ENCODE measurements at regions of chr18 and their contacts with region 1.

Region 1: GRCh38 chr18:62450546-62451406 is 72.0 kb upstream of the ZCCHC2 start:
- DNase-seq: peak; percentile 99
- H3K4me3 ChIP-seq: peak overlapping the region in 1 of 3 experiments; percentile 26
- H3K27ac ChIP-seq: peak overlapping the region; percentile 87
- H3K4me1 ChIP-seq: peaks cover 33% of the 10 kb centered on the region
- H3K27me3 ChIP-seq: no peaks in the 10 kb centered on the region
- CTCF ChIP-seq: no peak
- POLR2A ChIP-seq: peak; percentile 65

Region 2: GRCh38 chr18:62437235-62438017 is 13.3 kb before region 1 on chr18:
- CTCF ChIA-PET with region 1: interaction called, 22 read pairs
- POLR2A ChIA-PET with region 1: no interaction called
- dilution Hi-C with region 1: no loop called
- intact Hi-C with region 1: loop called (anchors 1 kb)
- DNase-seq: peak; percentile 57
- H3K4me3 ChIP-seq: no peak overlapping the region
- H3K27ac ChIP-seq: peak overlapping the region; percentile 65
- H3K4me1 ChIP-seq: peaks cover 22% of the 10 kb centered on the region
- H3K27me3 ChIP-seq: no peaks in the 10 kb centered on the region
- CTCF ChIP-seq: no peak
- POLR2A ChIP-seq: no peak

Region 3: GRCh38 chr18:62485684-62486083 is 34.9 kb after region 1 on chr18:
- CTCF ChIA-PET with region 1: interaction called, 5 read pairs
- POLR2A ChIA-PET with region 1: no interaction called
- dilution Hi-C with region 1: no loop called
- intact Hi-C with region 1: loop called (anchors 1 kb)
- DNase-seq: peak; percentile 91
- H3K4me3 ChIP-seq: peak overlapping the region in 1 of 3 experiments; percentile 5
- H3K27ac ChIP-seq: peak overlapping the region; percentile 65
- H3K4me1 ChIP-seq: peaks cover 23% of the 10 kb centered on the region
- H3K27me3 ChIP-seq: no peaks in the 10 kb centered on the region
- CTCF ChIP-seq: no peak
- POLR2A ChIP-seq: no peak

Region 4: DNA sequence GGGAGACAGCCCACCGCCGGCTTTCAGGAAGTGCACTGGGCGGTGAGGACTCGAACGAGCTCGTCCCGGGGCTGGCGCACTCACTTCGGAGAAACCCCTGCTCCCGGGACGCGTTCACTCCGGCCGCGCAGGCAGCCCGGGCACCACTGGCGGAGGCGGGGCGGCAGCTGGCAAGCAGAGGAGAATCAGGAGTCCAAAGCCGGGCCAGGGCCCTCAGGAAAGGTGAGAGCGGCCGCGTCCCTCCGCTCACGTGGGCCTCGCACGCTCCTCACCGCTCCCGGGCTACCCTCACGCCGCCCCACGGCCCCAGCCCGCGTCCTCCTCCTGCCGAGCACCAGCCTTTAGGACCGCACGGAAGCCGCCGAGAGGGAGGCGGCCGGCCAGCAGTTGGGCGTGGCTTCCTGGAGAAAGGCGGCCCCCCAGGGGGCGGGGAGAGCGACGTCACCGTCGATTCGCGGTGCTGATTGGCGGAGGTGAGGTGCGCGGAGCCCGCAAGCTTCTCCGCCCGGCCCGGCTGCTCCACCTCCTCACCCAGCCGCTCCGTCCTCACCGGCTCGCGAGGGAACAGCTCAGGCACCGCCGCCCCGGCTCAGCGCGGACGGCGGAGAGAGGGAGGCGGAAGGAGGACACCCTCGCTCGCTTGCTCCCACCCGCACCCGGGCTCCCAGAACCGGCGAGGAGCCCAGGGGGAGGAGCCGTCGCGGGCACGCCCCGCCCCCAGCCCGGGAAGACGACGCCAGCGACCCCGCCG is 71.9 kb after region 1 on chr18 and contains the start of gene ZCCHC2:
- CTCF ChIA-PET with region 1: interaction called, 30 read pairs
- POLR2A ChIA-PET with region 1: interaction called, 9 read pairs
- dilution Hi-C with region 1: no loop called
- intact Hi-C with region 1: loop called (anchors 1 kb)
- DNase-seq: peak; percentile 99
- H3K4me3 ChIP-seq: peak within 1 kb of the TSS; percentile 85 to 98 (median 96)
- H3K27ac ChIP-seq: peak within 1 kb of the TSS; percentile 94
- H3K4me1 ChIP-seq: peaks cover 30% of the 10 kb centered on the region
- H3K27me3 ChIP-seq: no peaks in the 10 kb centered on the region
- CTCF ChIP-seq: no peak
- POLR2A ChIP-seq: peak; percentile 79
- total RNA-seq, gene ZCCHC2: 20.6 and 27.2 TPM in 2 replicates

Region 5: GRCh38 chr18:62555135-62555534 is 104.4 kb after region 1 on chr18:
- CTCF ChIA-PET with region 1: interaction called, 3 read pairs
- POLR2A ChIA-PET with region 1: no interaction called
- dilution Hi-C with region 1: no loop called
- intact Hi-C with region 1: loop called (anchors 1 kb)
- DNase-seq: peak; percentile 76
- H3K4me3 ChIP-seq: no peak overlapping the region
- H3K27ac ChIP-seq: peak overlapping the region; percentile 0
- H3K4me1 ChIP-seq: peaks cover 25% of the 10 kb centered on the region
- H3K27me3 ChIP-seq: no peaks in the 10 kb centered on the region
- CTCF ChIP-seq: no peak
- POLR2A ChIP-seq: no peak

Region 6: GRCh38 chr18:62881509-62882016 is 430.8 kb after region 1 on chr18:
- CTCF ChIA-PET with region 1: no interaction called
- POLR2A ChIA-PET with region 1: no interaction called
- dilution Hi-C with region 1: no loop called
- intact Hi-C with region 1: loop called (anchors 10 kb)
- DNase-seq: peak; percentile 77
- H3K4me3 ChIP-seq: no peak overlapping the region
- H3K27ac ChIP-seq: peak overlapping the region; percentile 38
- H3K4me1 ChIP-seq: peaks cover 59% of the 10 kb centered on the region
- H3K27me3 ChIP-seq: no peaks in the 10 kb centered on the region
- CTCF ChIP-seq: no peak
- POLR2A ChIP-seq: no peak

Measured in endothelial cell of umbilical vein (primary cell).